ENCODE measurements at regions of chr3 and their contacts with region 1.

Region 1: GRCh38 chr3:5026331-5027218 is 47.3 kb downstream of the BHLHE40 start:
- DNase-seq: peak; percentile 59
- H3K4me3 Mint-ChIP-seq: peak overlapping the region; percentile 81
- H3K27ac Mint-ChIP-seq: peak overlapping the region; percentile 95
- H3K4me1 Mint-ChIP-seq: peaks cover 70% of the 10 kb centered on the region
- H3K27me3 Mint-ChIP-seq: no peaks in the 10 kb centered on the region

Region 2: DNA sequence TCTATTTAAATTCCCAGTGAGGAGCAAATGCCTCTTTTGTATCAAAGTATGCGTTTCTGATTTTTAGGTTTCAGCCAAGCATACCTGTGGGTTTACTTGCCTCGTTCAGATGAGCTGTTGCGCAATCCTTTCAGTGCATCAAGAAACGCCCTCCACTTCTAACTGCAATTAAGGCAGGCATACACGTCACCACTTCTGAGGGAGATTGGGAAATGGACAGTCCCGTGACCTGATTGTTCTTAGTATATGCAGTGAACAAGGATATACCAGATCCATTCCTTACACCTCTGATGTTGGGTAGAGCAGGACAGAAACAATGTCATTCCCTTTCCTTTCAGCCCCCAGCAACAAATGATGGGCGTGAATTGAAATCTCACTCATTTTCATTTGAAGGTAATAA is 314.4 kb before region 1 on chr3:
- intact Hi-C with region 1: loop called (anchors 1 kb)
- DNase-seq: no peak
- H3K4me3 Mint-ChIP-seq: no peak overlapping the region
- H3K27ac Mint-ChIP-seq: peak overlapping the region; percentile 32
- H3K4me1 Mint-ChIP-seq: peaks cover 61% of the 10 kb centered on the region
- H3K27me3 Mint-ChIP-seq: no peaks in the 10 kb centered on the region

Region 3: GRCh38 chr3:4804161-4805058 is 222.2 kb before region 1 on chr3:
- intact Hi-C with region 1: loop called (anchors 1 kb)
- DNase-seq: no peak
- H3K4me3 Mint-ChIP-seq: no peak overlapping the region
- H3K27ac Mint-ChIP-seq: peak overlapping the region; percentile 76
- H3K4me1 Mint-ChIP-seq: peaks cover 59% of the 10 kb centered on the region
- H3K27me3 Mint-ChIP-seq: no peaks in the 10 kb centered on the region

Region 4: GRCh38 chr3:4845882-4846281 is 180.7 kb before region 1 on chr3:
- intact Hi-C with region 1: loop called (anchors 1 kb)
- DNase-seq: no peak
- H3K4me3 Mint-ChIP-seq: peak overlapping the region; percentile 64
- H3K27ac Mint-ChIP-seq: peak overlapping the region; percentile 95
- H3K4me1 Mint-ChIP-seq: peaks cover 96% of the 10 kb centered on the region
- H3K27me3 Mint-ChIP-seq: no peaks in the 10 kb centered on the region

Region 5: GRCh38 chr3:4935347-4935746 is 91.2 kb before region 1 on chr3:
- intact Hi-C with region 1: no loop called
- DNase-seq: peak; percentile 19
- H3K4me3 Mint-ChIP-seq: peak overlapping the region; percentile 5
- H3K27ac Mint-ChIP-seq: peak overlapping the region; percentile 16
- H3K4me1 Mint-ChIP-seq: peaks cover 53% of the 10 kb centered on the region
- H3K27me3 Mint-ChIP-seq: no peaks in the 10 kb centered on the region

Region 6: DNA sequence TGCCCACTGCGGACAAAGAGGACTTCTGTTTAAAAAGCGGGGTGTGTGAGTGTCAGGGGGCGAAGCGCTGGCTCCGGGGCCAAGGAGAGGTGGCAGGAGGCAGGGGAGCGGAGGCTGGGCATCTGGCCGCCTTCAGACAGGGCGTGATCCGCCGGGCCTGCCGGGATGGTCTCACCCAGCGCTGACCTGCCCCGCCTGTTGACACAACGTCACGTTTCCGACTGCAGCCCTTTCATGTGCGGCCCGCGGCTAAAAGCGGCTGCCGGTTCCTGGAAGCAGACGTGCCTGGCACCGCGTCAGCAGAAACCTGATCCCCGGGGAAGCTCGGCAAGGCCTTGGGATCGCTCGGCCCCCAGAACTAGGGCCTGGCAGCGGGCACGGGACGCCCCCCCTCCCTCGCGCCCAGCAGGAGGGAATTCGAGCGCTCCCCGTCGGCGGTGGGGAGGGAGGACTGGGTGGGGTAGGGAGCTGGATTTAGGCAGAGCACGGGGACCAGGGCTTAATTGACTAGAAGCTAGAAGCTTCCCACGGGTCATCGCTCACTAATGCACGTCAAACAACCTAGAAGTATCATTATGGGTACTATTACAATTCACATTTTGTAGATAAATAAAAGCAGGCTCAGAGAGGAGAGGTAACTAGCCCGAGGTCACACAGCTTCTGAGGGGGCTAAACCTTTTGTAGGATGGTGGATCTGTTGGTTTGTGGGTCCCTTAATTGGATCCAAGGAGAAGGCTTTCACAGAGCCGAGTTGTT is 39.6 kb before region 1 on chr3:
- intact Hi-C with region 1: loop called (anchors 1 kb)
- DNase-seq: peak; percentile 78
- H3K4me3 Mint-ChIP-seq: peak overlapping the region; percentile 90
- H3K27ac Mint-ChIP-seq: peak overlapping the region; percentile 84
- H3K4me1 Mint-ChIP-seq: peaks cover 64% of the 10 kb centered on the region
- H3K27me3 Mint-ChIP-seq: no peaks in the 10 kb centered on the region

Region 7: DNA sequence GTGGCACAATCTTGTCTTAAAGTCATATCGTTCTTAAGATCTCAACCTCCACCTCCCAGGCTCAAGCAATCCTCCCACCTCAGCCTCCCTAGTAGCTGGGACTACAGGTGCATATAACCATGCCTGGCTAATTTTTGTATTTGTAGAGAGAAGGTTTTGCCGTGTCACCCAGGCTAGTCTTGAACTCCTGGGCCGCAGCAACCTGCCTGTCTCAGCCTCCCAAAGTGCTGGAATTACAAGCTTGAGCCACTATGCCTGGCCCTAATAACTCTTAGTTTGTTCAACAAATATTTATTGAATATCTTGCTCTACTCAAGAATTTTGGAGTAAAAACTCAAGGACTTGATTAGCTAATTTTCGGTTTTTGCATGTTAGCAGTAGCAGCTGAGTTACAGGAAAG is 141.5 kb after region 1 on chr3:
- intact Hi-C with region 1: no loop called
- DNase-seq: no peak
- H3K4me3 Mint-ChIP-seq: no peak overlapping the region
- H3K27ac Mint-ChIP-seq: no peak overlapping the region
- H3K4me1 Mint-ChIP-seq: peaks cover 19% of the 10 kb centered on the region
- H3K27me3 Mint-ChIP-seq: no peaks in the 10 kb centered on the region

Measured in activated T-helper 1 cell treated with anti-CD3 and anti-CD28 coated beads, Interleukin-12 subunit alpha, Interleukin-12 subunit beta, Interleukin-2, Interleukin-4 antibody, amounts not matched to agents 30 ng/mL and 10 ng/mL and 1 ng/mL, durations not matched to agents 14 hours and 24 hours and 36 hours (primary cell).